ENCODE measurements at regions of chr5 and their contacts with region 1.

Region 1: GRCh38 chr5:142655339-142656267 is 30.3 kb downstream of the FGF1 start:
- DNase-seq: peak; percentile 84
- ATAC-seq: peak; percentile 93 to 95

Region 2: GRCh38 chr5:142611154-142611553 is 44.4 kb before region 1 on chr5:
- intact Hi-C with region 1: loop called in 1 of 2 experiments (anchors 5 kb)
- DNase-seq: peak; percentile 75
- ATAC-seq: peak; percentile 88

Region 3: GRCh38 chr5:142830241-142830989 is 174.8 kb after region 1 on chr5:
- intact Hi-C with region 1: no loop called
- DNase-seq: no peak
- ATAC-seq: peak in 1 of 2 donors; percentile 19